Transverse colon (tissue), 4 donors: ENCODE measurements at regions of chr2 and their contacts with region 1.

Region 1: DNA sequence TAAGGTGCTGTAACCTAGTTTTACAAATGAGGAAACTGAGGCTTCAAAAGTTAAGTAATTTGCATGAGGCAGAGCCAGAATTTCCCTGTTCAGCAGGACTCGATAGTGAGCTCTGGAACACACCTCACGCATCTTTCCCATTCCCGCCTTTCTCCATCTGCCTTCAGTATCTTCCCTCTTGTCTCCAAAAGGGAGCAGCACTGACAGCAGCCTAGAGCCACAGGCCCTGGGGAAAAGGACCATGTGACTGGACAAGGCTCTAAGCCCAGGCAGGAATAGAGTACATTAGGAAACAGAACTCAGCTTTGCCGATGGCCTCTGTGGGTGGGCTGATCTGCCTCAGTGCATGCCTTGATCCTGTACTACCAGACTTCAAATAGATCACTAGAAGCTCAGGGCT is 21.5 kb downstream of the GPR155 start:
- DNase-seq: no peak
- H3K4me3 ChIP-seq: no peak overlapping the region
- H3K27ac ChIP-seq: no peak overlapping the region
- H3K4me1 ChIP-seq: no peaks in the 10 kb centered on the region
- H3K27me3 ChIP-seq: no peaks in the 10 kb centered on the region
- CTCF ChIP-seq: no peak
- EP300 ChIP-seq: no peak
- POLR2A ChIP-seq: no peak

Region 2: GRCh38 chr2:172864182-172864581 is 1601.1 kb before region 1 on chr2:
- in situ Hi-C with region 1: no loop called
- intact Hi-C with region 1: no loop called
- DNase-seq: peak; percentile 54
- H3K4me3 ChIP-seq: no peak overlapping the region
- H3K27ac ChIP-seq: no peak overlapping the region
- H3K4me1 ChIP-seq: peaks cover 0 to 5% (median 0%) of the 10 kb centered on the region in 4 donors
- H3K27me3 ChIP-seq: peaks cover 43% of the 10 kb centered on the region
- CTCF ChIP-seq: peak; percentile 62 to 72 (median 63)
- EP300 ChIP-seq: no peak
- POLR2A ChIP-seq: no peak

Region 3: GRCh38 chr2:174487108-174487819 is 21.9 kb after region 1 on chr2:
- in situ Hi-C with region 1: no loop called
- intact Hi-C with region 1: no loop called
- DNase-seq: peak; percentile 100
- H3K4me3 ChIP-seq: peak overlapping the region; percentile 39 to 86 (median 68)
- H3K27ac ChIP-seq: peak overlapping the region; percentile 89 to 91 (median 89)
- H3K4me1 ChIP-seq: peaks cover 0 to 18% (median 0%) of the 10 kb centered on the region in 4 donors
- H3K27me3 ChIP-seq: peaks cover 3% of the 10 kb centered on the region
- CTCF ChIP-seq: no peak
- EP300 ChIP-seq: no peak
- POLR2A ChIP-seq: peak; percentile 42

Region 4: GRCh38 chr2:174522553-174522952 is 57.2 kb after region 1 on chr2:
- in situ Hi-C with region 1: loop called in 1 of 4 experiments (anchors 5 kb)
- intact Hi-C with region 1: no loop called
- DNase-seq: no peak
- H3K4me3 ChIP-seq: no peak overlapping the region
- H3K27ac ChIP-seq: no peak overlapping the region
- H3K4me1 ChIP-seq: no peaks in the 10 kb centered on the region
- H3K27me3 ChIP-seq: no peaks in the 10 kb centered on the region
- CTCF ChIP-seq: peak in 2 of 5 experiments; percentile 18 to 28
- EP300 ChIP-seq: no peak
- POLR2A ChIP-seq: no peak

Region 5: DNA sequence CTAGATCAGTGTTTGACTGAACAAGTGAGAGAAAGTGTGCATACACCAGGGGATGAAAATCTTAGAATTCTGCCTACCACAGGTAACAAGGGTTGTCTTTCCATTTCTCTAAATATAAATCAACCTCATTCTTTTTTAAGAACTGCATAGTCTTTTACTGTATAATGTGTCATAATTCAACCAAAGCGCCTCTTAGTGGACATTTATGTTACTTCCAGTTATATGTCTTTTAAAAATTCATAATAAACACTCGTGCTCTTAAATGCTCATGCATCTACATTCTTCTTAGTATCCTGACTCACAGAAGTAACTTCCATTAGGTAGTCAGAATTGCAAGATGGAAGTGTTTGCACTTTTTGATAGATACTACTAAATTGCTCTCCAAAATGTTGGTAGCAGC is 222.8 kb after region 1 on chr2:
- in situ Hi-C with region 1: loop called (anchors 5 to 25 kb)
- intact Hi-C with region 1: loop called (anchors 5 kb)
- DNase-seq: no peak
- H3K4me3 ChIP-seq: no peak overlapping the region
- H3K27ac ChIP-seq: no peak overlapping the region
- H3K4me1 ChIP-seq: peaks cover 0 to 5% (median 2%) of the 10 kb centered on the region in 4 donors
- H3K27me3 ChIP-seq: peaks cover 5% of the 10 kb centered on the region
- CTCF ChIP-seq: peak; percentile 36 to 56 (median 44)
- EP300 ChIP-seq: no peak
- POLR2A ChIP-seq: no peak

Region 6: GRCh38 chr2:174697255-174697654 is 231.9 kb after region 1 on chr2:
- in situ Hi-C with region 1: loop called (anchors 5 to 25 kb)
- intact Hi-C with region 1: no loop called
- DNase-seq: peak; percentile 49
- H3K4me3 ChIP-seq: no peak overlapping the region
- H3K27ac ChIP-seq: no peak overlapping the region
- H3K4me1 ChIP-seq: no peaks in the 10 kb centered on the region
- H3K27me3 ChIP-seq: no peaks in the 10 kb centered on the region
- CTCF ChIP-seq: peak; percentile 46 to 69 (median 64)
- EP300 ChIP-seq: no peak
- POLR2A ChIP-seq: no peak